MCF 10A (cell line): ENCODE measurements at regions of chr5 and their contacts with region 1.

Region 1: DNA sequence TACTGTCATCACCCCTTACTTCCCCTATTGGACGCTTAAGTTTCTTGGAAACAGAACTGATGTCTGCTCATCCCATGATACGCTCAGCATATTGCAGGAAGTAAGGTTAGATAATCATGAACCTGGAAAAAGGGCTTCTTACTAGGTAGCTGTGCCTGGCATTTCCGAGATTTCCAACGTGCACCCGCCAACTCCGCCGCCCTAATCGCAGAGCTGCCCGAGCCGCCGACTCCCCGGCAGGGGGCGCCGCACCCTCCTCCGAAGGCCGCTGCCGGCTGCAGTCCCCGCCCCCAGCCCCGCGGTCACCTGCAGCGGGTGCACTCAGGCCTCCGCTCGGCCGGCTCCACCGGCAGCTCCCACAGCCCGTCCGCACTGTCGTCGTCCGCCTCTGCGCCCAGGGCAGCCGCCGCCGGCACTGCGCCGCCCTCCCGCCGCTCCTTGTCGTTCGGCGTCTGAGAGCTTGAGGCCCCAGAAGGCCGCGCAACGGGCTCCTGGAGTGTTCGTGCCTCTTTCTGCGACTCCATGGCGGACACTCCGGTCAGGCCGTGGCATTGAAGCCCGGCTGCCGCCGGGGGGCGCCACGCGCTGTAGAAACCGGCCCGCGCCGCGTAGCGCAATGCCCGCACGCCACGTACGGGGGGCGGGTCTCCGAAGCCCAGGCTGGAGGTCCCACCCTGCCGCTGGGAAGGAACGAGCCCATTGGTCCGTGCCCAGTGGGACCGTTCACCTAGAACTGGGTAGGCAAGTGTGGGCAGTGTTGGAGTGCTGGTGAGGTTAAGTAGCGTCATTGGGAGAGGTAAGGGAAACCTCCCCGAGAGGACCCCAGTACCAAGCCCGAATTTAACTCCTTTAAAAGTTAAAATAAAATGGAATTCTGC is at the start of gene DTWD2:
- DNase-seq: peak; percentile 96
- H3K4me3 Mint-ChIP-seq: peak within 1 kb of the TSS; percentile 82
- H3K27ac Mint-ChIP-seq: peak within 1 kb of the TSS; percentile 73
- H3K4me1 Mint-ChIP-seq: peaks cover 34% of the 10 kb centered on the region
- H3K27me3 Mint-ChIP-seq: no peaks in the 10 kb centered on the region
- CTCF ChIP-seq: peak; percentile 86
- total RNA-seq, gene DTWD2: 10.1 and 10.5 TPM in 2 replicates

Region 2: DNA sequence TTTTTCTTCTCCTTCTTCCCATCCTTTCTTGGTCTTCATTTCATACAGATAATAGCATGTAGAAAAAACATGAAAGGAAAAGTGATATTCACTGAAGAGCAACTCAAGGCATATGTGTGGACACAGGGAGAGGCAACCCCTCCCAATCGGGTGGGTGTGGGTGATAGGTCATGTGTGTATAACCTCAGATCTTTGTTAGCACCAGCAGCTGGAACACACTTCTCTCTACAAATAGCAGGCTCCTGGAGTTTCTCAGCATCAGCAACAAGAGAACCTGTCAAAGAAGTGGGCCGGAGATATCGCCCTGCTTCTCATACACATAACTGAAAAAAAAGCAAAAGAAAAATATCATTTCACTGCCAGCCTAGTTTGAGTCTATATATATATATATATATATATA is 426.3 kb before region 1 on chr5:
- CTCF ChIA-PET with region 1: no interaction called
- POLR2A ChIA-PET with region 1: no interaction called
- intact Hi-C with region 1: no loop called
- DNase-seq: no peak
- H3K4me3 Mint-ChIP-seq: no peak overlapping the region
- H3K27ac Mint-ChIP-seq: no peak overlapping the region
- H3K4me1 Mint-ChIP-seq: peaks cover 6% of the 10 kb centered on the region
- H3K27me3 Mint-ChIP-seq: no peaks in the 10 kb centered on the region
- CTCF ChIP-seq: no peak

Region 3: GRCh38 chr5:118616281-118616680 is 371.9 kb before region 1 on chr5:
- CTCF ChIA-PET with region 1: no interaction called
- POLR2A ChIA-PET with region 1: no interaction called
- intact Hi-C with region 1: no loop called
- DNase-seq: no peak
- H3K4me3 Mint-ChIP-seq: no peak overlapping the region
- H3K27ac Mint-ChIP-seq: no peak overlapping the region
- H3K4me1 Mint-ChIP-seq: no peaks in the 10 kb centered on the region
- H3K27me3 Mint-ChIP-seq: no peaks in the 10 kb centered on the region
- CTCF ChIP-seq: no peak

Region 4: GRCh38 chr5:119009131-119009530 is 20.9 kb after region 1 on chr5:
- CTCF ChIA-PET with region 1: interaction called, 24 read pairs
- POLR2A ChIA-PET with region 1: no interaction called
- intact Hi-C with region 1: no loop called
- DNase-seq: no peak
- H3K4me3 Mint-ChIP-seq: no peak overlapping the region
- H3K27ac Mint-ChIP-seq: no peak overlapping the region
- H3K4me1 Mint-ChIP-seq: no peaks in the 10 kb centered on the region
- H3K27me3 Mint-ChIP-seq: no peaks in the 10 kb centered on the region
- CTCF ChIP-seq: no peak

Region 5: DNA sequence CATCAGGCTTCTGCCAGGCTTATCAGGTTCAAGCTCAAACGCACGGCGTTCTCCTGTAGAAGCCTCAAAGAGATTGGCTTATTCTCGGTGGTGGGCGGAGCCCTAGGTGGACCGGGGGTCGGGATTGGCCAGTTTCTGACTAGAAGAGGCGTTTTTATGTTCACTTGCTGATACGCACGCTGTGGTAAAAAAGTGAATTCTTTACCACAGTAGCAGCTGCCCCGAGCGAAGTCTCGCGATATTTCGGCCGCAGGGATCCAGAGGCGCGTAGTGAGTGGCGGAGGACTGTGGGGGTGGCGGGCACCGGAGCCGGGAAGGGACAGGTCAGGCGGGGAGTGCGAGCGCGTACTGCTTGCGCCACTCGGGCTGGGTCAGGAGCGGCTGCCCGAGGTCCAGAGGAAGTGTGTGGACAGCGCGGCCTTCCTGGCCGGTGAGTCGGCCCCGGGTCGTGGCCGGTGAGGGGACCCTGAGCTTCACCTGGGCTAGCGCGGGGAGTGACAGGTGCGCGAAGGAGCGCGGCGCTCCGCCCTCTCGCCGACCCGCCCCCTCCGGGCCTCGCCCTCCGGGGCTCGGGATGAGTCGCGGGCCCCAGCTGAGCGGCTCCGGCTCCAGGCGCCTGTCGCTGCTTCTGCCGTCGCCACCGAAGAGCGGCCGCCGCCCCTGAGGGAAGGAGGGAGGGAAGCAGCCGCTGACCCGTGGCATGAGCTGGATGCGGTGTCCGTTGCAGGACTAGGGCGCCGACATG is 82.8 kb after region 1 on chr5 and contains the start of gene DMXL1:
- CTCF ChIA-PET with region 1: interaction called, 6 read pairs
- POLR2A ChIA-PET with region 1: interaction called, 37 read pairs
- intact Hi-C with region 1: loop called (anchors 1 kb)
- DNase-seq: peak; percentile 100
- H3K4me3 Mint-ChIP-seq: peak within 1 kb of the TSS; percentile 77
- H3K27ac Mint-ChIP-seq: peak within 1 kb of the TSS; percentile 79
- H3K4me1 Mint-ChIP-seq: peaks cover 24% of the 10 kb centered on the region
- H3K27me3 Mint-ChIP-seq: no peaks in the 10 kb centered on the region
- CTCF ChIP-seq: no peak
- total RNA-seq, gene DMXL1: 38.1 and 45.1 TPM in 2 replicates

Region 6: DNA sequence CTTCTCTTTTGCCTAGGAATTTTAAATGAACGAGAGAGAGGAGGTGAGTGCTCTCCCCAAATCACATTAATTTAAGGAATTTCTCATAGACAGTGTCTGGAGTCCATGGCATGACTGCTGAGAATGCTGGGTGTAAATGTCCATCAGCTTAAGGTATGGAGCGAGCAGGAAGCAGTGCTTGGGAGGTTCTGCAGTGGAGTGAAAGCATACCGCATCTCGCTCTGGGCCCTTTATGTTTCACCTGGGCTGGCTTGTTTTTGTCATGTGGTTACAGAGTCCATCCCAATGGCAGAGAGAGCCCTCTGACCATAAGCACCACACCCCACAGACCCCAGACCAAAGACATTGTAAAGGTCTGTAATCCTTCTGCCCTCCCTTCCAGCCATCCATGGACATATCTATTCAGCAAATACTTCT is 347.0 kb after region 1 on chr5:
- CTCF ChIA-PET with region 1: interaction called, 14 read pairs
- POLR2A ChIA-PET with region 1: interaction called, 18 read pairs
- intact Hi-C with region 1: loop called (anchors 1 kb)
- DNase-seq: no peak
- H3K4me3 Mint-ChIP-seq: peak overlapping the region; percentile 72
- H3K27ac Mint-ChIP-seq: peak overlapping the region; percentile 76
- H3K4me1 Mint-ChIP-seq: peaks cover 45% of the 10 kb centered on the region
- H3K27me3 Mint-ChIP-seq: no peaks in the 10 kb centered on the region
- CTCF ChIP-seq: no peak

Region 7: GRCh38 chr5:119360905-119361593 is 372.8 kb after region 1 on chr5:
- CTCF ChIA-PET with region 1: interaction called, 12 read pairs
- POLR2A ChIA-PET with region 1: interaction called, 10 read pairs
- intact Hi-C with region 1: loop called (anchors 1 kb)
- DNase-seq: peak; percentile 95
- H3K4me3 Mint-ChIP-seq: peak overlapping the region; percentile 44
- H3K27ac Mint-ChIP-seq: peak overlapping the region; percentile 80
- H3K4me1 Mint-ChIP-seq: peaks cover 81% of the 10 kb centered on the region
- H3K27me3 Mint-ChIP-seq: no peaks in the 10 kb centered on the region
- CTCF ChIP-seq: no peak

Region 8: DNA sequence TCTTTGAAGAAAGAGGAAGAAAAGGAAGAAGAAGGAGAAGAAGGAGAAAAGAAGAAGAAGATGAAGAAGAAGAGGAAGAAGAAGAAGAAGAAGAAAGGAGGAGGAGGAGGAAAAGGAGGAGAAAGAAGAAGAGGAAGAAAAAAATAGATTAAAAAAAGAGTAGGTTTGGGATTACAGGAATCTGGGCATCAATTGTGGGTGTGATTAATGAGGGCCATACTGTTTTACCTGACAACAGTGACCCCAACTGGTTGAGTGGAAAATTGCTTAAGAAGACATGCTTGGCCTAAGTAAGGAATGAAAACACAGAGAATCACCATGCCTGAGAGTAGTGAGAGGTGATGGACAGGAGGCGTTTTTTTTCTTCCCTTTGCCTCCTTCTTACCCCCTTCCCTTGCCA is 755.7 kb after region 1 on chr5:
- CTCF ChIA-PET with region 1: no interaction called
- POLR2A ChIA-PET with region 1: no interaction called
- intact Hi-C with region 1: loop called (anchors 1 kb)
- DNase-seq: peak; percentile 89
- H3K4me3 Mint-ChIP-seq: no peak overlapping the region
- H3K27ac Mint-ChIP-seq: no peak overlapping the region
- H3K4me1 Mint-ChIP-seq: no peaks in the 10 kb centered on the region
- H3K27me3 Mint-ChIP-seq: no peaks in the 10 kb centered on the region
- CTCF ChIP-seq: peak; percentile 58